Posterior vena cava (tissue), 2 donors: ENCODE measurements at regions of chr7 and their contacts with region 1.

Region 1: DNA sequence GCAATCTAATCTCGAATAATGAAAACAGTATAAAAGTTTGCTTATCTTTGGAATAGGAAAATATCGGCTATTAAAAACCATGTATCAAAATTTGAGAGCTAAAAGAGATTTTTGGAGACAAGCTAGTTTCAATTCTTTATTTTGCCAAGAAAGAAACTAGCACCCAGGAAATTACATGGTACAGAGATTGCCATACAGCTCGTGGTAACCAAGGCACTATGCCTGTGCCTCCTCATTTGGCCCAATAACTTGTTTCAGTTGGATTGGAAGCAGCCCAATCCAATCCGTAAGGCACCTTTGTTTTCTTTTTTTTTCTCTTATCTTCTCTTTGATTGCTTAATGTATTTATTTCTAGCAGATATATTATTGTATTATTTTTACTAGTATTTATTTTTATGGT is 55.0 kb downstream of the GNAI1 start:
- DNase-seq: no peak

Region 2: GRCh38 chr7:80145780-80146422 is 43.7 kb before region 1 on chr7:
- intact Hi-C with region 1: loop called in 1 of 2 experiments (anchors 10 kb)
- DNase-seq: no peak